ENCODE measurements at regions of chrX and their contacts with region 1.

Region 1: DNA sequence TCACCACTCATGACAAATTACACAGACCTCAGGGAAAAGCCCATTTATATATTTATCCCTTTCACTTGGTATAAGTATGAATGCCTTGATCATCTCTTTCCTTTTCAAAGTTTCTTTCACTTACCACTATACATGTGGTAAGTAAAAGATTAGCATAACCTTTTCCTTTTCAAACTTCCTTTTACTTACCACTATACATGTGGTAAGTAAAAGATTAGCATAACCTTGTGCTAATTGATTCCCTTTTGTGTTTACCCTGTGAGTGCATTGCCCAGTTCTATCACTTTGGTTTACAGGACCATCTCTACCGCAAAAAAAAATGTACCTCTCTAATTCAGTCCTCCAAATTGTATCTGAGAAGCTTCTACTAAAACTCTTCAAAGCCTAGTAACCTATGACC is 32.7 kb upstream of the TCEANC start:
- DNase-seq: no peak
- H3K4me3 ChIP-seq: no peak overlapping the region
- H3K27ac ChIP-seq: no peak overlapping the region
- H3K4me1 ChIP-seq: no peaks in the 10 kb centered on the region
- H3K27me3 ChIP-seq: peaks cover 8% of the 10 kb centered on the region
- CTCF ChIP-seq: no peak

Region 2: GRCh38 chrX:13569479-13570260 is 50.5 kb before region 1 on chrX and contains the start of gene EGFL6:
- dilution Hi-C with region 1: loop called (anchors 5 kb)
- DNase-seq: no peak
- H3K4me3 ChIP-seq: no peak within 1 kb of the TSS
- H3K27ac ChIP-seq: no peak within 1 kb of the TSS
- H3K4me1 ChIP-seq: no peaks in the 10 kb centered on the region
- H3K27me3 ChIP-seq: peaks cover 70% of the 10 kb centered on the region
- CTCF ChIP-seq: no peak
- polyA plus RNA-seq, gene EGFL6: 0.06 to 1.0 TPM (median 0.38 TPM) in 3 replicates

Region 3: GRCh38 chrX:13685126-13685763 is 65.0 kb after region 1 on chrX:
- dilution Hi-C with region 1: no loop called
- DNase-seq: no peak
- H3K4me3 ChIP-seq: no peak overlapping the region
- H3K27ac ChIP-seq: no peak overlapping the region
- H3K4me1 ChIP-seq: peaks cover 10% of the 10 kb centered on the region
- H3K27me3 ChIP-seq: peaks cover 4% of the 10 kb centered on the region
- CTCF ChIP-seq: no peak